ENCODE measurements at regions of chr3 and their contacts with region 1.

Region 1: DNA sequence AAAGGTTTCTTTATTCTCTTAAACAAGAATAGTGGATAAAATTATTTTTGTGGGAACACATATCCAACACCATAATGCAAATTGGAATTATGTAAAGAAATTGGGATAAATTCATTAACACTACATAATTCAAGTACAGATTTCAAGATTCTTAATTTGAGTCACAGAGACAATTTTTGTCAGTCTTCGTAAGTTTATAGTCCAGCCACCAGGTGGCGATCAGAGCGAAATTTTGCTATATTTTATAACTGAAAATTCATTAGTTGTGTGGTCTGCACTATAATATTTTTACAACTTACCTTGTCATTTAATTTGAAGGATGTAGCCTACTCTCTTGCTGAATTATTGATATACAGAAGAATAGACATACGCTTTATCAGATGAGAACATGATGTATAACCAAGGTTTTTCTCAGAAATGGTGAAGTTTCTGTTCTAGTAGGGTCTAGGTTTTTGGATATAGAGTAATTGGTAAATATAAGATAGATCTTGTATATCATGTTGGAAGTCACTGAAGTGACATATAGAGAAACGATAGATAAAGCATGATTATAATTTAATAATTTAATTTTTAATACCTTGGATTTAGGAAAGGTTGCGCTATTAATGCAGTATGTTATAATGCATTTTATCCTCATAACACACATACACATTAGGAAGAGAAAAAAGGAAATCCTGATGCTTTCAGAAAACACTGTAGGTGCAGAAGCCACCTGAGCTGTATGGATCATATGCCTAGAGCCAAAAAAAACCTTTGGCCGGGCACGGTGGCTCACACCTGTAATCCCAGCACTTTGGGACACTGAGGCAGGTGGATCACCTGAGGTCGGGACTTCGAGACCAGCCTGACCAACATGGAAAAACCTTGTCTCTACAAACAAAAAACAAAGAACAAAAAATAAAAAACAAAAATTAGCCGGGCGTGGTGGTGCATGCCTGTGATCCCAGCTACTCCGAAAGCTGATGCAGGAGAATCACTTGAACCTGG is 31.7 kb downstream of the PLSCR4 start:
- DNase-seq: peak; percentile 46
- H3K4me3 ChIP-seq: no peak overlapping the region
- H3K27ac ChIP-seq: no peak overlapping the region
- H3K4me1 ChIP-seq: peaks cover 3% of the 10 kb centered on the region
- H3K27me3 ChIP-seq: no peaks in the 10 kb centered on the region
- CTCF ChIP-seq: peak; percentile 63

Region 2: GRCh38 chr3:146326670-146327543 is 107.7 kb after region 1 on chr3:
- intact Hi-C with region 1: loop called (anchors 5 kb)
- DNase-seq: peak; percentile 45
- H3K4me3 ChIP-seq: no peak overlapping the region
- H3K27ac ChIP-seq: no peak overlapping the region
- H3K4me1 ChIP-seq: no peaks in the 10 kb centered on the region
- H3K27me3 ChIP-seq: no peaks in the 10 kb centered on the region
- CTCF ChIP-seq: peak; percentile 55

Region 3: DNA sequence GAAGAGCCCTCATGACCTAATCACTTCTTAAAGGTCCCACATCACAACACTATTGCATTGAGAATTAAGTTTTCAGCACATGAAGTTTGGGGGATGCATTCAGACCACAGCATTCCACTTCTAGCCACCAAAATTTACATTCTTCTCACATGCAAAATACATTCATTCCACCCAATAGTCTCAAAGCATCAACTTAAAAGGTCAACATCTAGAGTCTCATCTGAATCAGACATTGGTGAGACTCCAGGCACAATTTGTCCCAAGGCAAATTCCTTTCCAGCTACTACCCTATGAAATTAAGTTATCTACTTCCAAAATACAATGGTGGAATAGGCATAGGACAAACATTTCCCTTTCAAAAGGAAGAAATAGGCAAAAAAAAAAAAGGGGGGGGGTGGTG is 185.3 kb after region 1 on chr3:
- intact Hi-C with region 1: no loop called
- DNase-seq: no peak
- H3K4me3 ChIP-seq: no peak overlapping the region
- H3K27ac ChIP-seq: no peak overlapping the region
- H3K4me1 ChIP-seq: no peaks in the 10 kb centered on the region
- H3K27me3 ChIP-seq: no peaks in the 10 kb centered on the region
- CTCF ChIP-seq: no peak